HepG2 (cell line): ENCODE measurements at regions of chr15 and their contacts with region 1.

Region 1: GRCh38 chr15:70569091-70569621 is 194.2 kb downstream of the UACA start:
- DNase-seq: peak; percentile 68
- ATAC-seq: peak; percentile 98
- H3K4me3 ChIP-seq: no peak overlapping the region; a peak in 1 of 6 replicates
- H3K27ac ChIP-seq: no peak overlapping the region
- H3K4me1 ChIP-seq: peaks cover 10% of the 10 kb centered on the region
- H3K27me3 ChIP-seq: no peaks in the 10 kb centered on the region
- CTCF ChIP-seq: peak; percentile 85
- EP300 ChIP-seq: no peak
- POLR2A ChIP-seq: no peak
- RAD21 ChIP-seq: peak; percentile 69

Region 2: GRCh38 chr15:70584838-70585706 is 15.9 kb after region 1 on chr15:
- CTCF ChIA-PET with region 1: interaction called, 10 read pairs
- POLR2A ChIA-PET with region 1: interaction called, 5 read pairs
- in situ Hi-C with region 1: no loop called
- intact Hi-C with region 1: no loop called
- DNase-seq: peak; percentile 84
- ATAC-seq: peak; percentile 88
- H3K4me3 ChIP-seq: peak overlapping the region; percentile 59 to 73 (median 61)
- H3K27ac ChIP-seq: peak overlapping the region; percentile 75
- H3K4me1 ChIP-seq: peaks cover 32% of the 10 kb centered on the region
- H3K27me3 ChIP-seq: peaks cover 0 to 3% of the 10 kb centered on the region in 2 experiments; a peak in 1 of 5 replicates
- CTCF ChIP-seq: peak; percentile 84
- EP300 ChIP-seq: peak in 1 of 2 experiments; percentile 63; a peak in 2 of 4 replicates
- POLR2A ChIP-seq: no peak
- RAD21 ChIP-seq: peak; percentile 82

Region 3: GRCh38 chr15:70636540-70637165 is 67.5 kb after region 1 on chr15:
- CTCF ChIA-PET with region 1: interaction called, 21 read pairs
- POLR2A ChIA-PET with region 1: no interaction called
- in situ Hi-C with region 1: loop called (anchors 5 kb)
- intact Hi-C with region 1: loop called (anchors 1 kb)
- DNase-seq: peak; percentile 20
- ATAC-seq: peak; percentile 77
- H3K4me3 ChIP-seq: no peak overlapping the region
- H3K27ac ChIP-seq: no peak overlapping the region
- H3K4me1 ChIP-seq: peaks cover 21% of the 10 kb centered on the region
- H3K27me3 ChIP-seq: 0 out of 5 replicates have a peak, but pooled peaks cover 0 to under 1% of the 10 kb centered on the region in 2 experiments
- CTCF ChIP-seq: peak; percentile 71
- EP300 ChIP-seq: no peak
- POLR2A ChIP-seq: no peak
- RAD21 ChIP-seq: peak; percentile 50; the same call in 1 of the 2 replicates

Region 4: GRCh38 chr15:70722266-70723121 is 153.3 kb after region 1 on chr15:
- CTCF ChIA-PET with region 1: interaction called, 17 read pairs
- POLR2A ChIA-PET with region 1: interaction called, 3 read pairs
- in situ Hi-C with region 1: no loop called
- intact Hi-C with region 1: no loop called
- DNase-seq: peak; percentile 35
- ATAC-seq: no peak
- H3K4me3 ChIP-seq: no peak overlapping the region
- H3K27ac ChIP-seq: no peak overlapping the region
- H3K4me1 ChIP-seq: peaks cover 10% of the 10 kb centered on the region
- H3K27me3 ChIP-seq: no peaks in the 10 kb centered on the region
- CTCF ChIP-seq: peak; percentile 56
- EP300 ChIP-seq: no peak
- POLR2A ChIP-seq: no peak
- RAD21 ChIP-seq: no peak

Region 5: DNA sequence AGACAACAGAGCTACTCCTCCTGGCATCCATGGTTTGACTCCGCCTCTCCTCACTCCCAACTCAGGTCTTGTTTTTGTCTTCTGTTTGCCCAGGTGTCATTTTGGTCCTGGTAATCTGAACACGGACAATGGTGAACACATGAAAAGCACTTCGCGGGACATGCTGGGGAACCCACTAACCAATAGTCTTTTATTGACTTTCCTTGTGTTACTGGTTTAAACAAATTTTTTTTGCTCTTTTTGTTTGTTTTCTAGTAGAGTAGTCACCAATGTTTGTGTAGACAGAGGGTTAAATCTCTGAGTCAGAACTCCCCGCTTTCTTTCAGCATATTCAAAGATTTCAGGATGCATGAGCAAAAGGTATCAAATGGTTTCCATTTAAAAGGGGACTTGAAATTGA is 246.5 kb after region 1 on chr15:
- CTCF ChIA-PET with region 1: interaction called, 3 read pairs
- POLR2A ChIA-PET with region 1: no interaction called
- in situ Hi-C with region 1: no loop called
- intact Hi-C with region 1: loop called (anchors 1 kb)
- DNase-seq: peak; percentile 57
- ATAC-seq: peak; percentile 43; the same call in 1 of the 3 replicates
- H3K4me3 ChIP-seq: no peak overlapping the region
- H3K27ac ChIP-seq: no peak overlapping the region
- H3K4me1 ChIP-seq: peaks cover 22% of the 10 kb centered on the region
- H3K27me3 ChIP-seq: peaks cover 2 to 3% of the 10 kb centered on the region in 2 experiments; a peak in 2 of 5 replicates
- CTCF ChIP-seq: no peak
- EP300 ChIP-seq: peak in 1 of 2 experiments; percentile 29; a peak in 1 of 4 replicates
- POLR2A ChIP-seq: no peak
- RAD21 ChIP-seq: no peak